ENCODE measurements at regions of chr22 and their contacts with region 1.

Region 1: GRCh38 chr22:39306581-39307361 is 12.7 kb downstream of the RPL3 start:
- DNase-seq: peak; percentile 71
- H3K4me3 ChIP-seq: no peak overlapping the region
- H3K27ac ChIP-seq: no peak overlapping the region
- H3K4me1 ChIP-seq: peaks cover 14% of the 10 kb centered on the region
- H3K27me3 ChIP-seq: no peaks in the 10 kb centered on the region
- CTCF ChIP-seq: peak; percentile 46 to 71
- POLR2A ChIP-seq: no peak

Region 2: DNA sequence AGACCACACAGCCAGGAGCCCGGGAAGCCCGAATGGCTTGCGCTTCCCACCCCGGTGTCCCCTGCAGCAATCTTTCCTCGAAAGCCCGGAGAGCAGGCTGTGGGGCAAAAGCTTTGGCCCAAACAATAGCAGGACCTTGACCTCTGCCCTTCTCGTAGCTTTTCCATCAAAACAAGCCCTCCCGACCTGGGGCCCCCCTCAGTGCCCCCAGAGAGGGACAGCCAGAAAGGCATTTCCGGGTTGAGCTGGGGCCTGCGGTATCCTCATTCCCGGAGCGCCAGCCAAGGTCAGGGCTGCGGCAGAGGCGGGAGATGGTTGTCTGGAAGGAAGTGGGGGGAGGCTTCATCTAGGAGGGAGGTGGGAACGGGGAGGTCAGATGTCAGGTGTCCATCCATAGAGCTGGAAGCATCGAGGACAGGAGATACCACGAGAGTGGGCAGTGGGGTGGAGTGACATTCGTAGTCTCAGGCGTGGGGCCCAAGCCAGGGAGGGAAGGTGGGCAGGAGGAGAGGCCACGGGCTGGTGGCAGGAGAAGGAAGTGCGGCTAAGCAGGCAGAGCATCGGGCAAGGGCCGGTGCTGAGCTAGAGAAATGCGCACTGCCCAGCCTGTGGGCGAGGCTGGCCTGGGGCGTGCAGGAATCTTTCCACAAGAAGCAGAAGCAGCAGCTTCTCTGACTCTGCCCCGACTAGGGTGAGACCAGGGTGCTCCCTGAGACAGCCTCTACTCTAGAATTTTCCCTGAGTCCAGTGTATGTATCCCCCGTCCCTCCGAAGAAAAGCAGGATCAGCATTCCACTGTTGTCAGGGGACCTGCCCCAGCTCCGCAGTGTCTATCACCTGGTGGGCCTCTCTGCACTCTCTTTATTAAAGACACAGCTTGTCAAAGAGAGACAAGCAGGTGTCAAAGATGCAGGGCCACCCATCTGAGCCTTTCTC is 76.2 kb before region 1 on chr22:
- CTCF ChIA-PET with region 1: interaction called, 13 read pairs
- POLR2A ChIA-PET with region 1: interaction called, 6 read pairs
- dilution Hi-C with region 1: no loop called
- intact Hi-C with region 1: no loop called
- DNase-seq: no peak
- H3K4me3 ChIP-seq: no peak overlapping the region
- H3K27ac ChIP-seq: peak overlapping the region; percentile 51
- H3K4me1 ChIP-seq: peaks cover 47% of the 10 kb centered on the region
- H3K27me3 ChIP-seq: no peaks in the 10 kb centered on the region
- CTCF ChIP-seq: peak in 1 of 2 donors; percentile 32
- POLR2A ChIP-seq: no peak

Region 3: GRCh38 chr22:39244496-39245129 is 62.2 kb before region 1 on chr22 and contains the start of gene PDGFB:
- CTCF ChIA-PET with region 1: interaction called, 37 read pairs
- POLR2A ChIA-PET with region 1: interaction called, 15 read pairs
- dilution Hi-C with region 1: no loop called
- intact Hi-C with region 1: loop called (anchors 1 kb)
- DNase-seq: peak; percentile 65
- H3K4me3 ChIP-seq: peak within 1 kb of the TSS; percentile 68 to 91 (median 78)
- H3K27ac ChIP-seq: peak within 1 kb of the TSS; percentile 53
- H3K4me1 ChIP-seq: peaks cover 34% of the 10 kb centered on the region
- H3K27me3 ChIP-seq: no peaks in the 10 kb centered on the region
- CTCF ChIP-seq: no peak
- POLR2A ChIP-seq: peak; percentile 99
- total RNA-seq, gene PDGFB: 240 and 273 TPM in 2 replicates

Region 4: GRCh38 chr22:39283322-39284004 is 23.3 kb before region 1 on chr22:
- CTCF ChIA-PET with region 1: interaction called, 12 read pairs
- POLR2A ChIA-PET with region 1: interaction called, 5 read pairs
- dilution Hi-C with region 1: no loop called
- intact Hi-C with region 1: loop called (anchors 1 kb)
- DNase-seq: peak; percentile 91
- H3K4me3 ChIP-seq: no peak overlapping the region
- H3K27ac ChIP-seq: peak overlapping the region; percentile 93
- H3K4me1 ChIP-seq: peaks cover 43% of the 10 kb centered on the region
- H3K27me3 ChIP-seq: no peaks in the 10 kb centered on the region
- CTCF ChIP-seq: no peak
- POLR2A ChIP-seq: peak; percentile 53

Region 5: DNA sequence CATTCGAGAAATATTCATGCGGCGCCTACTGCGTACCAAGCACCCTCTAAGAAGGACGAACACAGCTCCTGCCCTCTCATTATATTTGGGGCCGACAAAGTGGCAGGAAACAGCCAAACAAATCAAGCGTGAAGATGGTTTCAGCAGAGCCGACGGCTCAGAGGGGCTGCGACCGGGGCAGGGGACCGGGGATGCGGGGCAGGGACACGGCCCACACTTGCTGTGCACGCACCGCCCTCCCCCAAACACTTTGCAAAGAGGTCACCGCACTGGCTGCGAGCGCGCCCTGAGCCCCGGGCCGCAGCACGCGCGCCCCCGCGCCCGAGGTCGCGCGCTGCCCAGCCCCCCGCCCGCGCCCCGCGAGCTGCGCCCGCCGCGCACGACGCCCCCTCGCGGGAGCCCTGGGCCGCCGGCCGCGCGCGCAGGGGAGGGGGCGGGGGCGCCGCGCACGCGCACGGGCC is 42.8 kb after region 1 on chr22:
- CTCF ChIA-PET with region 1: no interaction called
- POLR2A ChIA-PET with region 1: no interaction called
- dilution Hi-C with region 1: no loop called
- intact Hi-C with region 1: no loop called
- DNase-seq: no peak
- H3K4me3 ChIP-seq: peak overlapping the region; percentile 58 to 61 (median 60)
- H3K27ac ChIP-seq: no peak overlapping the region
- H3K4me1 ChIP-seq: peaks cover 4% of the 10 kb centered on the region
- H3K27me3 ChIP-seq: peaks cover under 1 to 2% of the 10 kb centered on the region in 2 experiments
- CTCF ChIP-seq: no peak
- POLR2A ChIP-seq: no peak